ENCODE measurements at regions of chr3 and their contacts with region 1.

Region 1: DNA sequence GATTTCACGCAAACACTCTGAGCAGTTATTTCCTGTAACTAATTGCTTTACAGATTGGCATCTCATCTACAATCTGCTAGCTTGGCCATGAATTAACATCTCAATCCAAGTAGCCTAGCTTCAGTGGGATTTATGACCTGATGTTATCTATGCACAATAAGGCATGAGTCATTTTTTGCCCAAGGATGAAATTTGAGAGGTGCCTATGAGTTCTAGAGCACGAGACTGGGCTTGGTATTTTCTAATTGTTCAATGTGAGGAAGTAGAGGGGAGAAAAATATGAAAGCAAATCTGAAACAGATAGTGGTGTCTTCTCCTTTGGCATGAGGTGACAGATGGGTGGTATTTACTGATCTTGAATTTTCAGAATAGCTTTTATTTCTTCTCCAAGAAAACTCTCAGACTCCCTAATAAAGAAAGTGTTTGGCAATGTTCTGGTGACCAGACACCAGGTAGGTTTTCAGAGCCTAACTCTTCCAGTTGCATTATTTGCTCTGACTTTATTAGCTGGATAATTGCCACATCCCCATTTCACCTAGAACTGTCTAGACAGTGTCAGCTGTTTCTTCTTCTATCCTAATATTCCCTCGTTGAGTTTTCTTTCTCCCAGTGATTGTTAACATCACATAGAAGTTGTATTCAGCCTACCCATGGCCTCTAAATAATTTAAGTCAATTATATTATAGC is 301.0 kb upstream of the UMPS start:
- DNase-seq: peak; percentile 82
- H3K4me3 ChIP-seq: no peak overlapping the region
- H3K27ac ChIP-seq: peak overlapping the region; percentile 22
- H3K4me1 ChIP-seq: peaks cover 23% of the 10 kb centered on the region
- H3K27me3 ChIP-seq: no peaks in the 10 kb centered on the region
- CTCF ChIP-seq: no peak

Region 2: GRCh38 chr3:124451630-124452317 is 22.5 kb after region 1 on chr3:
- CTCF ChIA-PET with region 1: no interaction called
- dilution Hi-C with region 1: no loop called
- in situ Hi-C with region 1: no loop called
- intact Hi-C with region 1: no loop called
- DNase-seq: no peak
- H3K4me3 ChIP-seq: no peak overlapping the region
- H3K27ac ChIP-seq: no peak overlapping the region
- H3K4me1 ChIP-seq: no peaks in the 10 kb centered on the region
- H3K27me3 ChIP-seq: peaks cover 7% of the 10 kb centered on the region
- CTCF ChIP-seq: no peak

Region 3: DNA sequence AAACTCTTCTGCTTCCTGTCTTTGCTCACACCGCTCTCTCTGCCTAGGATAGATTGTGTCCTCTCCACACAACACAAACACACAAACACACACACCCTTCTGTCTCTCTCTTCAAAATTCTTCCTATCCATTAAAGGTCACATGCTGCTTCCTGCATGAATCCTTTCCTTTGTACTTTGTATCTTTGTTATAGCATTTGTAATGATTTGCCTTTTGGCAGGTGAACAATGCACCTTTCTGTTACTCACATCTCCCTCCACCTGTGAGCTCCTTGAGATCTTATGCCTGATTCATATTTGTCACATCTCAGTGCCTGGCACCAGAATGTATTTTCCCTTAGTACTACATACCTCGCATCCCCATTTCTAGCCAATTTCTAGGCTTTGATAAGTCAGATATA is 49.6 kb after region 1 on chr3:
- CTCF ChIA-PET with region 1: no interaction called
- dilution Hi-C with region 1: loop called (anchors 5 kb)
- in situ Hi-C with region 1: no loop called
- intact Hi-C with region 1: no loop called
- DNase-seq: peak; percentile 19
- H3K4me3 ChIP-seq: no peak overlapping the region
- H3K27ac ChIP-seq: no peak overlapping the region
- H3K4me1 ChIP-seq: no peaks in the 10 kb centered on the region
- H3K27me3 ChIP-seq: no peaks in the 10 kb centered on the region
- CTCF ChIP-seq: no peak

Measured in mammary epithelial cell (primary cell).